IMR-90 (cell line): ENCODE measurements at regions of chr2 and their contacts with region 1.

Region 1: GRCh38 chr2:182077451-182078142 is 91.9 kb downstream of the PPP1R1C start:
- DNase-seq: peak; percentile 95
- ATAC-seq: peak; percentile 94
- H3K4me3 ChIP-seq: no peak overlapping the region
- H3K27ac ChIP-seq: peak overlapping the region; percentile 73
- H3K4me1 ChIP-seq: peaks cover 2% of the 10 kb centered on the region; the same call in 1 of the 2 replicates
- H3K27me3 ChIP-seq: no peaks in the 10 kb centered on the region
- CTCF ChIP-seq: peak; percentile 82
- POLR2A ChIP-seq: no peak
- RAD21 ChIP-seq: peak; percentile 87

Region 2: GRCh38 chr2:181573140-181573736 is 504.4 kb before region 1 on chr2:
- CTCF ChIA-PET with region 1: interaction called, 3 read pairs
- POLR2A ChIA-PET with region 1: no interaction called
- dilution Hi-C with region 1: no loop called
- in situ Hi-C with region 1: no loop called
- intact Hi-C with region 1: loop called (anchors 2 kb)
- DNase-seq: peak; percentile 50
- ATAC-seq: peak; percentile 54; the same call in 1 of the 2 replicates
- H3K4me3 ChIP-seq: no peak overlapping the region
- H3K27ac ChIP-seq: no peak overlapping the region
- H3K4me1 ChIP-seq: no peaks in the 10 kb centered on the region
- H3K27me3 ChIP-seq: peaks cover 9% of the 10 kb centered on the region
- CTCF ChIP-seq: peak; percentile 55
- POLR2A ChIP-seq: no peak
- RAD21 ChIP-seq: peak; percentile 47

Region 3: DNA sequence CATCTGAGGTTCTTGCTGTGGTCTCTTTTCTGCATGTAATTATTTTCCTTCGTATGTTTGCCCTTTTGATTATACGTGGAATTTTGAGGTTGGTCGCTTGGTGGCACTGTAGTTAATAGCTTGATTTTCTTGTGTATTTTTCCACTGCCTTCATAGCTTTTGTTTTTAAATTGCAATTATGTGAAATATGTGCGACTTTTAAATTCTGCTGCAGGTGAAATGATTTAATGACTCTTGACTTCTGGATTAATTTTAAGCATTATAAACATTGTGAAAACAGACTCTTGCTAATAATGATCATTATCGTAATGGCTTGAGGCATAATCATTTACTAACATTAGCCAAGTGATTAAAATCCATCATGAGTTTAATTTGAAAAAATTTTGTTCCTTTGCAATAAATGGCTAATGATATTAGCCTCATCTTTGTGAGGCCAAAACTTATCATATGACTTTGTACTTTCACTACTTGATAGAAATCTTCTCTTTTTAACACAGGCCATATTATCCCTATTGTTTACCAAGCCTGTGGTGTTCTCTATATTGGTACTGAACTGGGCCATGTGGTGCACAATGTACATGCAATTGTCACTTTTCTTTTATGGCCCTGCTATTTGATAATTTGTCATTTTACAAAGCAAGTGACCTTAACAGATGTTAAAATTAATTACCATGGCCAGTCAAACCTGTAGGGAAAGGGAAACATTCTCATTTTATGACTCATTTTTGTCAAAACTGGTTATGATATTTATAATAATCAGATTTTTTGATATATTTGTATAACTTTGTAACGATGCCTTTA is 334.5 kb before region 1 on chr2:
- CTCF ChIA-PET with region 1: interaction called, 12 read pairs
- POLR2A ChIA-PET with region 1: no interaction called
- dilution Hi-C with region 1: no loop called
- in situ Hi-C with region 1: loop called (anchors 5 kb)
- intact Hi-C with region 1: loop called (anchors 1 kb)
- DNase-seq: peak; percentile 73
- ATAC-seq: peak; percentile 77
- H3K4me3 ChIP-seq: no peak overlapping the region
- H3K27ac ChIP-seq: no peak overlapping the region
- H3K4me1 ChIP-seq: no peaks in the 10 kb centered on the region; the same call in 1 of the 2 replicates
- H3K27me3 ChIP-seq: no peaks in the 10 kb centered on the region
- CTCF ChIP-seq: peak; percentile 77
- POLR2A ChIP-seq: no peak
- RAD21 ChIP-seq: peak; percentile 80

Region 4: GRCh38 chr2:181904022-181904632 is 173.5 kb before region 1 on chr2:
- CTCF ChIA-PET with region 1: interaction called, 6 read pairs
- POLR2A ChIA-PET with region 1: no interaction called
- dilution Hi-C with region 1: no loop called
- in situ Hi-C with region 1: loop called (anchors 10 kb)
- intact Hi-C with region 1: no loop called
- DNase-seq: peak; percentile 50
- ATAC-seq: no peak
- H3K4me3 ChIP-seq: no peak overlapping the region
- H3K27ac ChIP-seq: no peak overlapping the region
- H3K4me1 ChIP-seq: peaks cover 3% of the 10 kb centered on the region; the same call in 1 of the 2 replicates
- H3K27me3 ChIP-seq: no peaks in the 10 kb centered on the region
- CTCF ChIP-seq: peak; percentile 64
- POLR2A ChIP-seq: no peak
- RAD21 ChIP-seq: peak; percentile 69

Region 5: DNA sequence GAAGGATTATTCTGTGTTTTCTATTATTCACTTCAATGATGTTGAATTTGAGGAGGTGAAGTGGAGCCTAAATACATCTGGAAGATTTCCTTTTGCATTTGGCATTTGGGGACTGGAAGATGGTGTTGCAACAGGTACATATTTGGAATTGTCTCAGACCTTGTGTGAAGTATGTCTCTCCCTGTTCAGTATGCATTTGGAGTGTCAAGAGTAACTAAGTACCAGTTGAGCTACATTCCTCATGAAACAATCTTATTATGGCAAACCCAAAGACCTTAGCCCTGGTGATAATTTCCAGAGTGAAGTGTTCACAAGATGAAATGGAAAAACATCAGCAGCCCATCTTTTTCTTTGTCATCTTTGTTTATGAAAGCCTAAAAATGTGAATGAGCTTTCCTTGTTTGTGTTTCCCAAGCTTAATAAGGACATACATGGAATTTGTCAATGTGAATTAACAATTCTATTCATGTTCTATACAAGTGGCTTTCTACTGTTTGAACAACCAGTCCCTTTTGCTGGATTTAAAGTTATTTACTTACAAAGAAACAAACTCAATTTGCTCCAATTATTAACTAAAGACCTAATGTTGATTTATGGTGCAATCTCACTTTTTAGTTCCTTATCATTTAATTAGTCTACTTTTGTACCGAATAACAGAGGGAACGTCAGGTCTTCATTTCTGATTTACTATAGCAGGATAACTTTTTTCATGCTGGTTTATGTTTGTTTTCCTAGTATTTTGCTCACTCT is 134.0 kb before region 1 on chr2:
- CTCF ChIA-PET with region 1: no interaction called
- POLR2A ChIA-PET with region 1: no interaction called
- dilution Hi-C with region 1: no loop called
- in situ Hi-C with region 1: no loop called
- intact Hi-C with region 1: loop called (anchors 5 kb)
- DNase-seq: no peak
- ATAC-seq: no peak
- H3K4me3 ChIP-seq: no peak overlapping the region
- H3K27ac ChIP-seq: no peak overlapping the region
- H3K4me1 ChIP-seq: no peaks in the 10 kb centered on the region
- H3K27me3 ChIP-seq: no peaks in the 10 kb centered on the region
- CTCF ChIP-seq: no peak
- POLR2A ChIP-seq: no peak
- RAD21 ChIP-seq: no peak